ENCODE measurements at regions of chr13 and their contacts with region 1.

Region 1: DNA sequence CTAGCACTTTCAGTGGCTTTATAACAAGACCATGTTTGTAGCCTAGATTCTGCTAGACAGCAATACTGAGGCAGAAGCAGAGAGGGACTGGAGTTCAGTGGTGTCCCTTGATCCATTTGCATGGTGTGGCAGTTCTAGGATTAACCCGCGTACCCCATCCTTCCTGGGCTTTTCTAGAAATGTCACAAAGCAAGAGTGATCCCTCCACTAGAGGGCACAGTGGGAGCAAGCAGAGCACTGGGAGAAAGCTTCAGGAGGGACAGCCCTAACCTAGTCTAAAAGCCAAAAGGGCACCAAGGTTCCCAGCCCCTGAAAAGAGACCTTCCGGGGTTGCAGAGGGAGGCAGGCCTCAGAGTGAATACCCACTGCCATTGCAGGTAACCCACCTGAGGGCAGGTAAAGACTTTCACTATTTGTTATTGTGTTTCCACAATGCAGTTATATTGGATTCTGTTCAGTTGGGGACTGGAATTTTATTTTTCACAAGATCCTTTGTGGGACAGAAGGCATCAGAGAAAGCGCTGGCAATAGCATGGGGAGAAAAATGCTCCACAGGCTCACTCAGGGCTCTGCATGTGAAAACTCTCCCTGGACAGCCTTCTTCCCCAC is 170.6 kb downstream of the FLT1 start:
- DNase-seq: peak in 2 of 4 donors; percentile 47 to 64
- ATAC-seq: peak; percentile 96
- H3K4me3 ChIP-seq: no peak overlapping the region
- H3K27ac ChIP-seq: no peak overlapping the region
- H3K4me1 ChIP-seq: peaks cover 2 to 22% of the 10 kb centered on the region in 2 donors
- H3K27me3 ChIP-seq: no peaks in the 10 kb centered on the region
- CTCF ChIP-seq: peak; percentile 54 to 79

Region 2: GRCh38 chr13:28636674-28637317 is 312.5 kb after region 1 on chr13:
- intact Hi-C with region 1: loop called in 1 of 2 experiments (anchors 10 kb)
- DNase-seq: peak in 1 of 4 donors; percentile 50
- ATAC-seq: peak; percentile 97
- H3K4me3 ChIP-seq: no peak overlapping the region
- H3K27ac ChIP-seq: no peak overlapping the region
- H3K4me1 ChIP-seq: peaks cover 0 to 19% of the 10 kb centered on the region in 2 donors
- H3K27me3 ChIP-seq: no peaks in the 10 kb centered on the region
- CTCF ChIP-seq: peak; percentile 74 to 80

Measured in left lung (tissue), 14 donors.